ENCODE measurements at regions of chr11 and their contacts with region 1.

Region 1: GRCh38 chr11:46006418-46007070 is 84.1 kb downstream of the LARGE2 start:
- DNase-seq: no peak

Region 2: DNA sequence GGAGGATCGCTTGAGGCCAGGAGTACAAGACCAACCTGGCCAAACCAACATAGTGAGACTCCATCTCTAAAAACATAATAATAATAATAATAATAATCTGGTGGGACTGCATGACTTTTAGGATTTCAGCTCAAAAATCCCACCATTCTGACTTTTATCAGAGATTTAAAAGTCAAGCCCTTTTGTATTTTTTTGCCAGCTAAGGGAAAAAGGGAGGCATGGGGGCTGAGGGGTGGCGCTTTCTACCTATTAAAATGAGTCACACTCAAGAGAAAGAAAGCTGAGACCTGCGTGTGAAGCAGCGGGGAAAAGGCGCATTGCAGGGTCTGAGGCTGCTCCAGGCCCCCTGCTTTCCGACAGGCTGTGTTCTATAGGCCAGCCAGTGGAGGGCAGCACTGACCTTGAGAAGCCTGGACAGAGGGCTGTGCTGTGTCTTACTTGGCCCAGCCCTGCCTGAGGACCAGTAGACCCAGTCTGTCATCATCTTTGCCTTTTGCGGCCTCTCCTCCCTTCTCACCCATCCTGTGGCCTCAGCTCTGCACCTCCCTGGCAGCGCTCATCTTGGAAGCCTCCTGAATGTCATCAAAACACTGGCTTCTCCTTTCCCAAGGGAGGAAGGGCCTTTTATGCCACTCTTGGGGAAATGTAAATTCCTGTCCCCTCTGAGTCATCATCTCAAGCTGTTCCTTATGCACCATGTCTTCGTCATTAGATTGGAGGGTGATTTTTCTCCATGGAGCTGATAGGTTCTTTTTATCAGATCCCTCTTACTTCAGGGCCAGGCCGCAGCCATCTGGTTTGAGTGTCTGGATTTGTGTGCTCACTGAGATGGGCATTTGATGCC is 133.8 kb before region 1 on chr11:
- intact Hi-C with region 1: loop called (anchors 2 kb)
- DNase-seq: peak; percentile 46 to 96 (median 75)

Region 3: DNA sequence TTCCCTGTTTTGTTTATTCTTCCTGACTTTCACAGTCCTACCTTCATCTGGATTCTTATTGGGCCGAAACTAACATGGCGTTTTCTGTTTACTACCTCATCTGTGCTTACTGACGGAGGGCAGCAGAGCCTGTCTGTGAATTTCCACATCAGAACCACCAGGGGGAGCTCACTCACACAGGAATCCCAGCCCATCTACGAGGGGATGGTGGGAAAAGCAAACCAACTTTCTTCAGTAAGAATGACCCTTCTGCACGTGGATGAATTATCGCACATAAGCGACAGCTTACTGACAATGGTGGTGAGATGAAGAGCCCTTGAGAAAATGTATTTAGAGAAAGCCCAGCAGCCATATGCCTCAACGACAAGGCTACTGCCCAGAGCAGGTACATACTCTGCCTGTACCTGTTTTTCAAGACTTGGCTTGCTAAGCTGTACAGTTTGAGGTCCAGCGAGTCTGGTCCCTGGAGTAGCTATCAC is 41.6 kb before region 1 on chr11:
- intact Hi-C with region 1: loop called (anchors 1 kb)
- DNase-seq: peak in 9 of 10 donors; percentile 19 to 94 (median 66)

Region 4: GRCh38 chr11:46786110-46786509 is 779.6 kb after region 1 on chr11:
- intact Hi-C with region 1: no loop called
- DNase-seq: no peak

Measured in posterior cingulate gyrus (tissue), 11 donors.